CD8-positive, alpha-beta T cell (primary cell): ENCODE measurements at regions of chr9 and their contacts with region 1.

Region 1: DNA sequence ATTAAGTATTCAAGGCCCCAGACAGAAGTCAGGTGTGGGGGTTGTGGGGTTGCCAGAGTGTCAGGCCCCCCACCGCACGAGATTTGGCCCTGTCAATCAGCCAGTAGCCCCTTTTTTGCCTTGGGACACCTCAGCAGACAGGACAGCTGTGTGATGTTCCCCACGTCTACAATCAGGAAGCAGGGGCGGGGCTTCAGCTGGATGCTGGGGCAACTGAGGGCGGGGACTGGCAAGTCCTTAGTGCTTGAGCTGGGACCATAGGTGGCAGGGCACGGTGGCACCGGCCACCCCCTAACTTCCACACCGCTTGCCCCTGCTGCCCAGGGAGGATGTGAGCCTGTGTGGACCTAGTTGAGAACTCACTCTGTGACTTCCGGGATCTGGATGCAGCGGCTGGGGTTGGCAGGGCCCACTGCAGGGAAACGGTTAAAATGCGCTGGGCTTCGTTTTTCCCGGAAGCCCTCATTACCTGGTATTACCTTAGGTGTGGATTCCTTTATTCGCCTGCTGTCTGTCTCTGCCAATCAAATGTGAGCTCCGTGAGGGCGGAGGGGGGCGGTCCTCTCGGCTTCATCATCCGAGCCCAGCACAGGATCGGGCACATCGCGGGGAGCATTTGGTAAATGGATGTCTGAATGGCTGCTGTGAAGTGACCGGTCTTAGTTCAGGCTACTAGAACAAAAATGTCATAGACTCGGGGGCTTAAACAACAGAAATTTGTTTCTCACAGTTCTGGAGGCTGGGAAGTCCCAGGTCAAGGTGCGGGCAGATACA is 7.5 kb upstream of the GTF3C5 start:
- DNase-seq: peak in 5 of 9 experiments; percentile 19 to 53 (median 39)
- ATAC-seq: no peak
- H3K4me3 ChIP-seq: no peak overlapping the region
- H3K4me3 Mint-ChIP-seq: no peak overlapping the region
- H3K27ac ChIP-seq: no peak overlapping the region
- H3K27ac Mint-ChIP-seq: no peak overlapping the region
- H3K4me1 ChIP-seq: peaks cover 4% of the 10 kb centered on the region
- H3K4me1 Mint-ChIP-seq: peaks cover 13% of the 10 kb centered on the region
- H3K27me3 ChIP-seq: no peaks in the 10 kb centered on the region
- H3K27me3 Mint-ChIP-seq: no peaks in the 10 kb centered on the region
- CTCF ChIP-seq: no peak

Region 2: DNA sequence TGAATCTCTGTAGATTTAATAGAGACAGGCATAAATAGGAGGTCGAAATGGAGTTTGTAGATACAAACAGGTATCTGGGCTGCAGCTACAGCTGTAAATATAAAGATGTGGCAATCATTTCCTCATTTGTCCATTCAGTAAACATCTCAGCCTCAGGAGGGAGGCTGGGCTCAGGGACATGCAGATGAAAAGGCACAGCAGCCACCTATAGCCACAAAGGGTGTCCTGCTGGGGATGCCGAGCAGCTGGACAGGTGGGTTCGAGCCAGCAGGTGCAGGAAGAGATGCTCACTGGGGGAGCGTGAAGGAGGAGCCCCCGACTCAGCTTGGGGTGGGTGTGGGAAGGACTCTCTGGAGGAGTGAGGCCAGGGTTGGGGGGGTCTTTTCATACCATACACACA is 1235.0 kb before region 1 on chr9:
- CTCF ChIA-PET with region 1: no interaction called
- POLR2A ChIA-PET with region 1: no interaction called
- intact Hi-C with region 1: no loop called
- DNase-seq: no peak
- ATAC-seq: no peak
- H3K4me3 ChIP-seq: no peak overlapping the region
- H3K4me3 Mint-ChIP-seq: no peak overlapping the region
- H3K27ac ChIP-seq: no peak overlapping the region
- H3K27ac Mint-ChIP-seq: no peak overlapping the region
- H3K4me1 ChIP-seq: no peaks in the 10 kb centered on the region
- H3K4me1 Mint-ChIP-seq: no peaks in the 10 kb centered on the region
- H3K27me3 ChIP-seq: peaks cover 4% of the 10 kb centered on the region in 2 experiments
- H3K27me3 Mint-ChIP-seq: peaks cover 51% of the 10 kb centered on the region
- CTCF ChIP-seq: no peak

Region 3: GRCh38 chr9:133008824-133009223 is 14.5 kb before region 1 on chr9:
- CTCF ChIA-PET with region 1: interaction called, 15 read pairs
- POLR2A ChIA-PET with region 1: interaction called, 4 read pairs
- intact Hi-C with region 1: no loop called
- DNase-seq: no peak
- ATAC-seq: no peak
- H3K4me3 ChIP-seq: no peak overlapping the region
- H3K4me3 Mint-ChIP-seq: no peak overlapping the region
- H3K27ac ChIP-seq: no peak overlapping the region
- H3K27ac Mint-ChIP-seq: no peak overlapping the region
- H3K4me1 ChIP-seq: no peaks in the 10 kb centered on the region
- H3K4me1 Mint-ChIP-seq: no peaks in the 10 kb centered on the region
- H3K27me3 ChIP-seq: peaks cover 0 to 3% of the 10 kb centered on the region in 2 experiments
- H3K27me3 Mint-ChIP-seq: peaks cover 26% of the 10 kb centered on the region
- CTCF ChIP-seq: no peak

Region 4: DNA sequence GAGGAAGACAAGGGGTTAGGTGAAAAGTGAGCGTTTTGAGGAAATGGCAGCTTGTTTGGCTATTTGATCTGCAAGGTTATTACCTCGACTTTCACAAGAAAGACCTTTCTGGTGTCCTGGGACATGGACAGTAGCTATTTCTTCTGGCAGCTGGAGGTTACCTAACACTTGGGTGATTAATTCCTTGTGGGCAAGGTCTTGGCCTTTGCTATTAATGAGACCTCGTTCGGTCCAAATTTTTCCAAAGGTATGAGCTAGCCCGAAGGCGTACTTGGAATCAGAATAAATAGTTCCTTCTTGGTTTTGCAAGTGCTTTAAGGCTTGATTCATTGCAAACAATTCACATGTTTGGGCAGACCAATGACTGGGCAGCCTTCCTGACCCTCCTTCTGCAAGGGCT is 12.4 kb after region 1 on chr9:
- CTCF ChIA-PET with region 1: interaction called, 33 read pairs
- POLR2A ChIA-PET with region 1: interaction called, 5 read pairs
- intact Hi-C with region 1: loop called in 1 of 2 experiments (anchors 1 kb)
- DNase-seq: no peak
- ATAC-seq: no peak
- H3K4me3 ChIP-seq: no peak overlapping the region
- H3K4me3 Mint-ChIP-seq: no peak overlapping the region
- H3K27ac ChIP-seq: no peak overlapping the region
- H3K27ac Mint-ChIP-seq: no peak overlapping the region
- H3K4me1 ChIP-seq: peaks cover 19% of the 10 kb centered on the region
- H3K4me1 Mint-ChIP-seq: peaks cover 59% of the 10 kb centered on the region
- H3K27me3 ChIP-seq: no peaks in the 10 kb centered on the region
- H3K27me3 Mint-ChIP-seq: no peaks in the 10 kb centered on the region
- CTCF ChIP-seq: no peak

Region 5: DNA sequence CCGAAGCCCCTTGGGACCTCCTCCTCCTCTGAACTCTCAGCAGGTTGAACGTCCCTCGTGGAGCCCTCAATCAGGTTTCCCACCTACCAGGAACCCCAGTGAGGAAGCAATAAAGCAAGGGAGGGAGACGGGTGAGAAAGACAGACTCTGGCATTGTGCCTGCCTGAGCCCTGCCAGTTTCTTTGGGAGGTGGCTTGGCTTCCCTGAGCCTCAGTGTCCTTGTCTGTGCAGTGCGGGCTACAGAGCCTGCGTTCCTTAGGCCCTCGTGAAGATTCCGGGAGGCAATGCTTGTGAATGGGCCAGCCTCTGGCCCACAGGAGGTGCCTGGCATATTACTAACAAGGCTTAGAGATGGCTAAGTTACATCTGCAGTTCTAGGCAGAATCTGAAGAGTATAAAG is 19.4 kb after region 1 on chr9:
- CTCF ChIA-PET with region 1: interaction called, 12 read pairs
- POLR2A ChIA-PET with region 1: no interaction called
- intact Hi-C with region 1: no loop called
- DNase-seq: no peak
- ATAC-seq: no peak
- H3K4me3 ChIP-seq: no peak overlapping the region
- H3K4me3 Mint-ChIP-seq: no peak overlapping the region
- H3K27ac ChIP-seq: no peak overlapping the region
- H3K27ac Mint-ChIP-seq: no peak overlapping the region
- H3K4me1 ChIP-seq: no peaks in the 10 kb centered on the region
- H3K4me1 Mint-ChIP-seq: peaks cover 12% of the 10 kb centered on the region
- H3K27me3 ChIP-seq: no peaks in the 10 kb centered on the region
- H3K27me3 Mint-ChIP-seq: no peaks in the 10 kb centered on the region
- CTCF ChIP-seq: no peak